ENCODE measurements at regions of chr13 and their contacts with region 1.

Region 1: GRCh38 chr13:95156208-95156607 is 145.0 kb downstream of the ABCC4 start:
- DNase-seq: no peak
- H3K4me3 Mint-ChIP-seq: no peak overlapping the region
- H3K27ac Mint-ChIP-seq: no peak overlapping the region
- H3K4me1 Mint-ChIP-seq: peaks cover 5% of the 10 kb centered on the region
- H3K27me3 Mint-ChIP-seq: no peaks in the 10 kb centered on the region

Region 2: GRCh38 chr13:94620286-94620896 is 535.8 kb before region 1 on chr13:
- CTCF ChIA-PET with region 1: no interaction called
- intact Hi-C with region 1: loop called (anchors 1 kb)
- DNase-seq: peak; percentile 41
- H3K4me3 Mint-ChIP-seq: no peak overlapping the region
- H3K27ac Mint-ChIP-seq: no peak overlapping the region
- H3K4me1 Mint-ChIP-seq: peaks cover 7% of the 10 kb centered on the region
- H3K27me3 Mint-ChIP-seq: no peaks in the 10 kb centered on the region

Region 3: GRCh38 chr13:94674609-94675348 is 481.4 kb before region 1 on chr13:
- CTCF ChIA-PET with region 1: no interaction called
- intact Hi-C with region 1: loop called (anchors 1 kb)
- DNase-seq: peak; percentile 80
- H3K4me3 Mint-ChIP-seq: no peak overlapping the region
- H3K27ac Mint-ChIP-seq: no peak overlapping the region
- H3K4me1 Mint-ChIP-seq: no peaks in the 10 kb centered on the region
- H3K27me3 Mint-ChIP-seq: peaks cover 23% of the 10 kb centered on the region

Region 4: DNA sequence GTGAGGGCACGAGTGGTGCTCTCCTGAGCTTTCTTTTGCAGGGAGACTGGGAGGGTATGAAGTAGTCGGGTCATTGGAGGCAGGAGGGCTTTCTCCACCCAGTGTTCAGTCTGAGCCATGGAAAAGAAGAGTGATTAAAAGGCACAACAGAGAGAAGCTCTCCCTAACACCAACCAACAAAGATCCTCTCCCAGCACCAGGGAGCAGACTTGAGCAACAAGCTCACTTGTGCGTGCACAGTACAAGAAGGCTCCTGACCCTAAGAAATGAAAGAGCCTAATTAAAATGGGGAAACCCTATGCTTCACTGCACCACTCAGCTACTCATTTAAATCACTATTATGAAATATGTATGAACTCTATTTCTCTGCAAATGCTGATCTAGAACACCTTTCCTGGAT is 167.6 kb before region 1 on chr13:
- CTCF ChIA-PET with region 1: no interaction called
- intact Hi-C with region 1: loop called (anchors 10 kb)
- DNase-seq: peak; percentile 7
- H3K4me3 Mint-ChIP-seq: no peak overlapping the region
- H3K27ac Mint-ChIP-seq: no peak overlapping the region
- H3K4me1 Mint-ChIP-seq: peaks cover 3% of the 10 kb centered on the region
- H3K27me3 Mint-ChIP-seq: peaks cover 12% of the 10 kb centered on the region